IMR-90 (cell line): ENCODE measurements at regions of chr11 and their contacts with region 1.

Region 1: DNA sequence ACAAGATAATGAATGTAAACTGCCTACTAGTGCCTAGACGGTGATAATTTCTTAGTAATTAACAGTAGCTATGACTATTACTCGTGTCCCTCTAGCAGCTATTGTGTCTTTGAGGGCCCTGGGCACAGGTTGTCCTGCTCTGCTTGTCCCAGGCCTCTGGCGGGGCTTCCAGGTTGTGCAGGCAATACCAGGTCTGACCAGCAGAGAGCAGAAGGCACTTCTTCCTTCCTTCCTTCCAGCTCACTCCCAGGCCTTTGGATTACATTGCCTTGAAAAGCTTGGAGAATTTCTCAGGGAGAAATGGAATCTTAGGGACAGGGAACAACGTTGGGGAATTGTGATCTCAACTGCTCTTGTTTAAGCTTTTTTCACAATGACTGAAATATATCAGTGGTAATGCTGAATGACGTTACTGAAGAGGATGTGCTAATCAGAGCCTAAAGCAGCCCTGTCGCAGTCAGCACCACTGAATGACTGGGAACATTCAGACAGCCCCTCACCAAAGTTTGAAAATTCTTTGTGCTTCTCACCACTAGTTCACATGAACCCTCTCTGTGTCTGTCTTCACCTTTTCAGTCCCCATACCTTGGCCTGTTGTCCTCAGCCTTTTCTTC is 8.4 kb upstream of the CCKBR start:
- DNase-seq: peak; percentile 75
- ATAC-seq: peak; percentile 89
- H3K4me3 ChIP-seq: no peak overlapping the region
- H3K27ac ChIP-seq: no peak overlapping the region
- H3K4me1 ChIP-seq: peaks cover 11% of the 10 kb centered on the region
- H3K27me3 ChIP-seq: peaks cover 9% of the 10 kb centered on the region
- CTCF ChIP-seq: peak; percentile 91
- POLR2A ChIP-seq: no peak
- RAD21 ChIP-seq: peak; percentile 74

Region 2: DNA sequence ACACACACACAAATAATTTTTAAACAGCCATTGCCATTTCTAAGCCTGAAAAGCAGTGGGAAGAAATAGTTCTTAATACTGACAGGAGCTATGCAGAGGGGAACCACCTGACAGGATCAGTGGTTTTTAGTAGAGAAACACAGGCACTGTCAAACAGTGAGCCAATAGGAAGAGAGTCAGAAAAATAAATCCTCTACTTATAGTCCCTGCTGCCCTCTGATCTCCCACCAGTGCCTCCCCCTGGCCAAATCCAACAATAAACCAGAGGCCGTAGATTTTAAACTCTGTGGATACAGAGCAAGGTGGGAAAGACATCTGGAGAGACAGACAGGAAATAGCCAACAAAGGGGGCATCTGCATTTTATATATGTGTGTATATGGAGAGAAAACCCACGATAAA is 151.7 kb before region 1 on chr11:
- CTCF ChIA-PET with region 1: no interaction called
- POLR2A ChIA-PET with region 1: no interaction called
- dilution Hi-C with region 1: no loop called
- in situ Hi-C with region 1: no loop called
- intact Hi-C with region 1: no loop called
- DNase-seq: no peak
- ATAC-seq: no peak
- H3K4me3 ChIP-seq: no peak overlapping the region
- H3K27ac ChIP-seq: no peak overlapping the region
- H3K4me1 ChIP-seq: no peaks in the 10 kb centered on the region
- H3K27me3 ChIP-seq: no peaks in the 10 kb centered on the region
- CTCF ChIP-seq: no peak
- POLR2A ChIP-seq: no peak
- RAD21 ChIP-seq: no peak

Region 3: GRCh38 chr11:6298605-6299004 is 47.4 kb after region 1 on chr11:
- CTCF ChIA-PET with region 1: interaction called, 11 read pairs
- POLR2A ChIA-PET with region 1: no interaction called
- dilution Hi-C with region 1: no loop called
- in situ Hi-C with region 1: no loop called
- intact Hi-C with region 1: no loop called
- DNase-seq: no peak
- ATAC-seq: peak; percentile 80
- H3K4me3 ChIP-seq: no peak overlapping the region
- H3K27ac ChIP-seq: no peak overlapping the region
- H3K4me1 ChIP-seq: peaks cover 1% of the 10 kb centered on the region; the same call in 1 of the 2 replicates
- H3K27me3 ChIP-seq: peaks cover 2% of the 10 kb centered on the region; the same call in 1 of the 2 replicates
- CTCF ChIP-seq: peak; percentile 67
- POLR2A ChIP-seq: no peak
- RAD21 ChIP-seq: peak; percentile 43

Region 4: GRCh38 chr11:6315811-6316425 is 64.7 kb after region 1 on chr11:
- CTCF ChIA-PET with region 1: interaction called, 6 read pairs
- POLR2A ChIA-PET with region 1: no interaction called
- dilution Hi-C with region 1: no loop called
- in situ Hi-C with region 1: loop called (anchors 5 kb)
- intact Hi-C with region 1: loop called (anchors 1 kb)
- DNase-seq: peak; percentile 65
- ATAC-seq: peak; percentile 32
- H3K4me3 ChIP-seq: no peak overlapping the region
- H3K27ac ChIP-seq: no peak overlapping the region
- H3K4me1 ChIP-seq: peaks cover 7% of the 10 kb centered on the region
- H3K27me3 ChIP-seq: no peaks in the 10 kb centered on the region
- CTCF ChIP-seq: peak; percentile 84
- POLR2A ChIP-seq: peak; percentile 30; the same call in 1 of the 2 replicates
- RAD21 ChIP-seq: peak; percentile 85